IMR-90 (cell line): ENCODE measurements at regions of chr10 and their contacts with region 1.

Region 1: GRCh38 chr10:31031558-31032257 is at the start of gene ZNF438:
- DNase-seq: peak; percentile 95
- ATAC-seq: peak; percentile 92
- H3K4me3 ChIP-seq: peak within 1 kb of the TSS; percentile 75
- H3K27ac ChIP-seq: peak within 1 kb of the TSS; percentile 96
- H3K4me1 ChIP-seq: peaks cover 14% of the 10 kb centered on the region
- H3K27me3 ChIP-seq: no peaks in the 10 kb centered on the region
- CTCF ChIP-seq: peak; percentile 53
- POLR2A ChIP-seq: peak; percentile 74; the same call in 1 of the 2 replicates
- RAD21 ChIP-seq: peak; percentile 60
- total RNA-seq, gene ZNF438: 2.8 and 2.9 TPM in 2 replicates

Region 2: GRCh38 chr10:30736685-30737232 is 294.9 kb before region 1 on chr10:
- CTCF ChIA-PET with region 1: no interaction called
- POLR2A ChIA-PET with region 1: no interaction called
- dilution Hi-C with region 1: no loop called
- in situ Hi-C with region 1: no loop called
- intact Hi-C with region 1: loop called (anchors 5 kb)
- DNase-seq: peak; percentile 100
- ATAC-seq: peak; percentile 98
- H3K4me3 ChIP-seq: no peak overlapping the region
- H3K27ac ChIP-seq: peak overlapping the region; percentile 97
- H3K4me1 ChIP-seq: peaks cover 7% of the 10 kb centered on the region
- H3K27me3 ChIP-seq: no peaks in the 10 kb centered on the region
- CTCF ChIP-seq: no peak
- POLR2A ChIP-seq: no peak
- RAD21 ChIP-seq: no peak

Region 3: DNA sequence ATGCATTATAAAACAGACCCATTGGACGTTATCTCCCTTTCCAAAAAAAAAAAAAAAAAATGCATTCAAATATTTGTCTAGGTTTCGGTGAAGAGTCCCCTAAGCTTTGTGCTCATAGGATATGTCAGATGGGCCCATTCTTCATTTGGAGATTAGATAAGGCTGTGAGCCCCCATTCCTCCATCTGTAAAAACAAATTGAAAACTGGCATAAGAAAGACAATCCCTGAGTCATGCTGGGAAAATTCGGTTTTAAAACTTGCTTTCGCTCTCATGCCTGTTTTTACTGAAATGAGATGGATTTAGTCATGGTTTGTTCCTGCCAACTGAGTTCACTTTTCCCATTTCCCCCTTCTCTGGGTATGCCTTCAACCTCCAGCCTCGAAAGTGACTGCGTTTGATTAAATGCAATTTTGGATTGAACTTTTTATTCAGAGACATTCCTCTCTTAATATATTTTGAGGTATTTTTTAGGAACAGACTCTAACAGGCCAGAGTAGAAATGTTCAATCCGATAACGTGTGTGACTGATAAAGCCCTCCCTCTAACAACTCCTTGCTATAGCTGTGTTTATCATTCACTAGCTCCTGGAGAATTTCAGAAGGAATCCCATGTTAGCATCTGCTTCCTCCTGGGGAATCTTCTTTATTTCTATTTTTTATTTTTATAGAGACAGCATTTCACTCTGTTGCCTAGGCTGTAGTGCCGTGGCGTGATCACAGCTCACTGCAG is 211.3 kb before region 1 on chr10:
- CTCF ChIA-PET with region 1: no interaction called
- POLR2A ChIA-PET with region 1: interaction called, 3 read pairs
- dilution Hi-C with region 1: no loop called
- in situ Hi-C with region 1: no loop called
- intact Hi-C with region 1: loop called (anchors 2 kb)
- DNase-seq: peak; percentile 95
- ATAC-seq: peak; percentile 69
- H3K4me3 ChIP-seq: peak overlapping the region; percentile 4; the same call in 1 of the 2 replicates
- H3K27ac ChIP-seq: peak overlapping the region; percentile 93
- H3K4me1 ChIP-seq: peaks cover 32% of the 10 kb centered on the region
- H3K27me3 ChIP-seq: no peaks in the 10 kb centered on the region
- CTCF ChIP-seq: no peak
- POLR2A ChIP-seq: no peak
- RAD21 ChIP-seq: peak; percentile 10; the same call in 1 of the 2 replicates

Region 4: GRCh38 chr10:31133628-31134302 is 102.1 kb after region 1 on chr10:
- CTCF ChIA-PET with region 1: no interaction called
- POLR2A ChIA-PET with region 1: interaction called, 13 read pairs
- dilution Hi-C with region 1: no loop called
- in situ Hi-C with region 1: loop called (anchors 5 kb)
- intact Hi-C with region 1: loop called (anchors 5 kb)
- DNase-seq: peak; percentile 65
- ATAC-seq: peak; percentile 48
- H3K4me3 ChIP-seq: no peak overlapping the region
- H3K27ac ChIP-seq: peak overlapping the region; percentile 100
- H3K4me1 ChIP-seq: peaks cover 24% of the 10 kb centered on the region
- H3K27me3 ChIP-seq: no peaks in the 10 kb centered on the region
- CTCF ChIP-seq: no peak
- POLR2A ChIP-seq: 0 out of 2 replicates have a peak, but pooled peaks have one; percentile 10
- RAD21 ChIP-seq: no peak

Region 5: GRCh38 chr10:31261511-31262311 is 230.0 kb after region 1 on chr10:
- CTCF ChIA-PET with region 1: interaction called, 3 read pairs
- POLR2A ChIA-PET with region 1: no interaction called
- dilution Hi-C with region 1: no loop called
- in situ Hi-C with region 1: no loop called
- intact Hi-C with region 1: loop called (anchors 2 kb)
- DNase-seq: peak; percentile 94
- ATAC-seq: peak; percentile 83
- H3K4me3 ChIP-seq: no peak overlapping the region; the same call in 1 of the 2 replicates
- H3K27ac ChIP-seq: peak overlapping the region; percentile 88
- H3K4me1 ChIP-seq: peaks cover 21% of the 10 kb centered on the region
- H3K27me3 ChIP-seq: no peaks in the 10 kb centered on the region
- CTCF ChIP-seq: no peak
- POLR2A ChIP-seq: no peak
- RAD21 ChIP-seq: no peak; the same call in 1 of the 2 replicates